GM12878 (cell line): ENCODE measurements at regions of chr9 and their contacts with region 1.

Region 1: DNA sequence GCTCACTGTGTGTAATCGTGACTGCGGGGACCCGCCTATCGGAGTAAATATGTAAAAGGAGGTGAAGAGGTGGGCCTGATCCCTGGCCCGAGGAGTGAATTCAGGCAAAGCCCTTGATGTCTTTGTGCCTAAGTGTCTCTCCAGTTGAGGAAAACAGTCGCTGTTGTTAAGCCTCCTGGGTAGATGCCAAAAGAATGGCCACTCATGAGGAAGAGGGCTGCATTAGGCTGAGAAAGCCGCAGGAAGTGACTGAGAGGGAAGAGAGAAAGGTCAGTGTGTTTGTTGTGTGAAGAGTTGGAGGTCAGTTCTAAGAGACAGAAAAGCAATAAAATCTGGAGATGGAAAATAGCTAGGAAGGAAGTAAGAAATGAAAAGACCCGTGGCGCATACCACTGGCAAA is 35.8 kb upstream of the PIP5K1B start:
- DNase-seq: no peak
- ATAC-seq: no peak
- H3K4me3 ChIP-seq: no peak overlapping the region
- H3K27ac ChIP-seq: no peak overlapping the region
- H3K4me1 ChIP-seq: no peaks in the 10 kb centered on the region
- H3K27me3 ChIP-seq: no peaks in the 10 kb centered on the region
- CTCF ChIP-seq: no peak
- EP300 ChIP-seq: no peak
- POLR2A ChIP-seq: no peak
- RAD21 ChIP-seq: no peak

Region 2: DNA sequence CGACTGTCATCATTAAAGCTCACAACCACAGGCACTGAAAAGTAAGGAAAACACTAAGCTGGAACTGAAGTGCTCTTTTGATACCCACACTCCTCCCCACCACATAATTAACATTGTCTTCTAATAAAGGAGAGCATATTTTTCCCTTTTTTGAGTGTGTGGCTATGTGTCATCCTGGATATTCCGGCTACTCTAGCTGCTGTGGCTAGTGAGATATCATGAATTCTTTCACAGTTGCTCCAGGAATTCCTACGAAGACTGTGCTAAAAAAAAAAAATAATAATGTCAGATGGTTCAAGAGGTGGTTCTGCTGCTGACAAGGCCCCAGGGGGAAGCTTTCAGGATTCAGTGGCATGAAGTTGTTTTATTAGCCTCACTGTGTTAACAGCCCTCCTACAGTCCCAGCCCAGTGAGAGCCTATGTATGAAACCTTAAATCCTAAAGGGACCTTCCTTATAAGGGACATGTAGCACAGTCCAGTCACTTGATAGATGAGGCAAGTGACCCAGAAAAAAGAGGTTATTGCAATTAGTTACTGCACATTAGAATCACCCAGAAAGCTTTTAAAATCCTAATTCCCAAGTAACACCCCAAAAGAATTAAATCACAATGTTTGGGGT is 175.2 kb before region 1 on chr9:
- CTCF ChIA-PET with region 1: no interaction called
- POLR2A ChIA-PET with region 1: no interaction called
- RAD21 ChIA-PET with region 1: no interaction called
- SMC1A ChIA-PET with region 1: no interaction called
- in situ Hi-C with region 1: no loop called
- intact Hi-C with region 1: no loop called
- DNase-seq: no peak
- ATAC-seq: no peak
- H3K4me3 ChIP-seq: no peak overlapping the region
- H3K27ac ChIP-seq: no peak overlapping the region
- H3K4me1 ChIP-seq: no peaks in the 10 kb centered on the region
- H3K27me3 ChIP-seq: peaks cover 2 to 11% of the 10 kb centered on the region in 2 experiments; a peak in 3 of 4 replicates
- CTCF ChIP-seq: no peak
- EP300 ChIP-seq: no peak
- POLR2A ChIP-seq: no peak
- RAD21 ChIP-seq: no peak

Region 3: GRCh38 chr9:68685770-68686169 is 16.6 kb after region 1 on chr9:
- CTCF ChIA-PET with region 1: interaction called, 19 read pairs
- POLR2A ChIA-PET with region 1: no interaction called
- RAD21 ChIA-PET with region 1: interaction called, 3 read pairs
- SMC1A ChIA-PET with region 1: interaction called, 39 read pairs
- in situ Hi-C with region 1: no loop called
- intact Hi-C with region 1: no loop called
- DNase-seq: no peak
- ATAC-seq: peak; percentile 99
- H3K4me3 ChIP-seq: no peak overlapping the region
- H3K27ac ChIP-seq: no peak overlapping the region
- H3K4me1 ChIP-seq: no peaks in the 10 kb centered on the region
- H3K27me3 ChIP-seq: no peaks in the 10 kb centered on the region
- CTCF ChIP-seq: peak; percentile 73 to 86 (median 77)
- EP300 ChIP-seq: no peak
- POLR2A ChIP-seq: no peak
- RAD21 ChIP-seq: peak; percentile 90